SK-N-SH (cell line): ENCODE measurements at regions of chr1 and their contacts with region 1.

Region 1: GRCh38 chr1:52348704-52349300 is 17.2 kb downstream of the CC2D1B start:
- DNase-seq: peak; percentile 81
- H3K4me3 ChIP-seq: no peak overlapping the region
- H3K27ac ChIP-seq: peak overlapping the region in 1 of 2 experiments; percentile 71; a peak in 2 of 4 replicates
- H3K4me1 ChIP-seq: peaks cover 0 to 5% of the 10 kb centered on the region in 2 experiments; a peak in 1 of 4 replicates
- H3K27me3 ChIP-seq: no peaks in the 10 kb centered on the region
- CTCF ChIP-seq: peak; percentile 44
- EP300 ChIP-seq: no peak
- RAD21 ChIP-seq: peak; percentile 88

Region 2: GRCh38 chr1:52127181-52128180 is 221.3 kb before region 1 on chr1:
- CTCF ChIA-PET with region 1: interaction called, 54 read pairs
- POLR2A ChIA-PET with region 1: interaction called, 5 read pairs
- DNase-seq: peak; percentile 62
- H3K4me3 ChIP-seq: no peak overlapping the region
- H3K27ac ChIP-seq: no peak overlapping the region
- H3K4me1 ChIP-seq: no peaks in the 10 kb centered on the region
- H3K27me3 ChIP-seq: no peaks in the 10 kb centered on the region
- CTCF ChIP-seq: peak; percentile 87
- EP300 ChIP-seq: no peak
- RAD21 ChIP-seq: peak; percentile 90

Region 3: GRCh38 chr1:52141513-52142219 is 207.1 kb before region 1 on chr1 and contains the start of gene ZFYVE9:
- CTCF ChIA-PET with region 1: interaction called, 10 read pairs
- POLR2A ChIA-PET with region 1: interaction called, 3 read pairs
- DNase-seq: peak; percentile 94
- H3K4me3 ChIP-seq: peak within 1 kb of the TSS; percentile 83 to 90
- H3K27ac ChIP-seq: peak within 1 kb of the TSS; percentile 86 to 89
- H3K4me1 ChIP-seq: peaks cover 4 to 19% of the 10 kb centered on the region in 2 experiments
- H3K27me3 ChIP-seq: no peaks in the 10 kb centered on the region
- CTCF ChIP-seq: peak; percentile 49
- EP300 ChIP-seq: no peak
- RAD21 ChIP-seq: peak; percentile 57
- polyA plus RNA-seq, gene ZFYVE9: 4.1 and 5.4 TPM in 2 replicates

Region 4: DNA sequence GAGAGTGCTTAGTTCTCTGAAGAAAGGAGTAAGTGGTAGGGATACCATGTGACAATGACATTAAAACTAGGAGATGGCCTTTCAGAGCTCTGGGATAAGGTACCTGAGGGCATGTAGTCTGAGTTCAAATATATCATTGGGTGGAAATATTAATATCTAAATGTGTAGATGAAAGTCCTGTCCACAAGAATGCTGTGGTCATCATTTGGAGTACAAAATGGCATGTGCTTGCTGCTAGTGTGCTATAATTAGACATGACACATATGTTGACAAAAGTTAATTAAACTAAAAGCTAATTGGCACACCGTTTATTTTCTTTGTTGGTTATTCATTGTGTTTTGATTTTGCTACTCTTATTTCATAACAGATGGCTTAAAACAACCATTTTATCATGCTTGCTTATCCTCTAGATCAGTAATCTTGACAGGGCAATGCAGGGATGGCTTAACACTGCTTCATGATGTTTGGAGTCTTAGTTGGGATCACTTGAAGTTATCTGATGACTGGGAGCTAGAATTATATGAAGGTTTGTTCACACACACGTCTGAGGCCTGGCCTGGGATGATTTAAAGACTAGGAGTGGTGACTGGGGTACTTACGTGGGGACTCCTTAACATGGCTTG is 13.8 kb before region 1 on chr1:
- CTCF ChIA-PET with region 1: interaction called, 13 read pairs
- POLR2A ChIA-PET with region 1: no interaction called
- DNase-seq: no peak
- H3K4me3 ChIP-seq: no peak overlapping the region
- H3K27ac ChIP-seq: no peak overlapping the region
- H3K4me1 ChIP-seq: no peaks in the 10 kb centered on the region
- H3K27me3 ChIP-seq: no peaks in the 10 kb centered on the region
- CTCF ChIP-seq: no peak
- EP300 ChIP-seq: no peak
- RAD21 ChIP-seq: no peak

Region 5: GRCh38 chr1:52359676-52360594 is 11.1 kb after region 1 on chr1:
- CTCF ChIA-PET with region 1: interaction called, 12 read pairs
- POLR2A ChIA-PET with region 1: interaction called, 3 read pairs
- DNase-seq: peak; percentile 38
- H3K4me3 ChIP-seq: no peak overlapping the region
- H3K27ac ChIP-seq: no peak overlapping the region
- H3K4me1 ChIP-seq: peaks cover 0 to 9% of the 10 kb centered on the region in 2 experiments; a peak in 3 of 4 replicates
- H3K27me3 ChIP-seq: no peaks in the 10 kb centered on the region
- CTCF ChIP-seq: 0 out of 2 replicates have a peak, but pooled peaks have one; percentile 8
- EP300 ChIP-seq: no peak
- RAD21 ChIP-seq: no peak